ENCODE measurements at regions of chr3 and their contacts with region 1.

Region 1: DNA sequence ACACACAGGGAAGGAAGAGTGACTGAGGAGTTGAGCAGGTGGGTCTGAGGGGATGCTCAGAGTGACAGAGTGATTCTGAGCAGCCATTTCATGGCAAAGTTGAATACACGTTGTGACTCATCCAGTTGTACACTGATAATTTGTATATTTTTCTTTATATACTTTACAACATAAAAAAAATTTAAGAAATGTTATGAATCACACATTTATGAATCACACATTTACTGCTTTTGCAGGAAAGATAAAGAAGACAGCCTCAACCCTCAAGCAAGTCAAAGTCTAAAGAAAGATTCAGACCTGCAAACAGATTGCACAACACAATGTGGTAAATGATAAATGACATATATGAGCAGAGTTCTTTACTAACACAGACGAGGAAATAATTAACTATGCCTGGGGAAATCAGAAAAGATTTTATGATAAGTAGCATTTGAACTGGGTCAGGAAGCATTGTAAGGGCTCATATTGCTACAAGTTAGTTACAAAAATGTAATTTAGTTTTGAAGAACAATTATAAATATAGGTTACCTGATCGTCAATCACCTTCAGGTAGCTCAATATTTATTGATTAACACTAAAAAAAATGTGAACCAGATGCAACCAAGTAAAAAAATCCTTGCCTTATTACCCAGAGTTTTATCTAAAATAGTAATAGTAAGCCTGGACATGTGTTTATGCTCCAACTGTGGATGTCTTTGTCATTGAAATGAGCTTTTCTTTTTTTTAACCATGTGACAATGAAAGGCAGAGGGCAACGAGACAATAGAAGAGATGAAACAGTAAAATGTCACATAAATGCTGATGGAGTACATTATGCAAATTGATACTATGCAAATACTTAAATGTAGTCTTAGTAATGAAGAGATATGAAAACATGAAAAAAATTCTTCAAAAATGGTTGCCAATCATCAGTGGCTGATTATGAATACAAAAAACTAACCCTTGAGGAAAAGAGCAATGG is 20.8 kb upstream of the CHMP2B start:
- DNase-seq: peak; percentile 30 to 98
- H3K4me3 ChIP-seq: peak overlapping the region; percentile 15; the same call in 1 of the 2 replicates
- H3K27ac ChIP-seq: peak overlapping the region; percentile 60
- H3K4me1 ChIP-seq: peaks cover 33% of the 10 kb centered on the region
- H3K27me3 ChIP-seq: no peaks in the 10 kb centered on the region
- CTCF ChIP-seq: no peak

Region 2: DNA sequence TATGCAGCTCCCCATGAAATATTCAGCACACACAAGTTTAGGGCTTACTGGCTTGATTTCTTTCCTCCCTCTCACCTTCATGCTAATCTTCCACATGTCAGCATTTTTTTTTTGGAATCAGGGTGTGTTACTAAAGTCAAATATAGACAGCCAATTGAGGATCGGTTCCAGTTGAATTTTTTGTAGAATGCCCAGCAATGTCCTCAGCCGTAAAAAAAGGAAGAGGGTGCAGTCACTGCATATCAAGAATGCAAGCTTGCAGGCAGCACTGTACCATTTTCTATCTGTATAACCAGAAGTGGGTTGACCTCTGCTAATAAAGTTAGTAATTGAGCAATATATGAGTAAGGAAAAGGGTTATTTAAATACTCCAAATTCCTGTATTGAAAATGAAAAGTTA is 30.6 kb before region 1 on chr3:
- CTCF ChIA-PET with region 1: no interaction called
- POLR2A ChIA-PET with region 1: no interaction called
- intact Hi-C with region 1: no loop called
- DNase-seq: no peak
- H3K4me3 ChIP-seq: no peak overlapping the region
- H3K27ac ChIP-seq: no peak overlapping the region
- H3K4me1 ChIP-seq: no peaks in the 10 kb centered on the region
- H3K27me3 ChIP-seq: no peaks in the 10 kb centered on the region
- CTCF ChIP-seq: no peak

Region 3: GRCh38 chr3:87227104-87227834 is 20.9 kb after region 1 on chr3 and contains the start of gene CHMP2B:
- CTCF ChIA-PET with region 1: no interaction called
- POLR2A ChIA-PET with region 1: interaction called, 3 read pairs
- intact Hi-C with region 1: loop called (anchors 1 kb)
- DNase-seq: peak; percentile 85 to 92
- H3K4me3 ChIP-seq: peak within 1 kb of the TSS; percentile 84
- H3K27ac ChIP-seq: peak within 1 kb of the TSS; percentile 97
- H3K4me1 ChIP-seq: peaks cover 25% of the 10 kb centered on the region
- H3K27me3 ChIP-seq: no peaks in the 10 kb centered on the region
- CTCF ChIP-seq: no peak
- total RNA-seq, gene CHMP2B: 38.1 and 54.6 TPM in 2 replicates

Region 4: DNA sequence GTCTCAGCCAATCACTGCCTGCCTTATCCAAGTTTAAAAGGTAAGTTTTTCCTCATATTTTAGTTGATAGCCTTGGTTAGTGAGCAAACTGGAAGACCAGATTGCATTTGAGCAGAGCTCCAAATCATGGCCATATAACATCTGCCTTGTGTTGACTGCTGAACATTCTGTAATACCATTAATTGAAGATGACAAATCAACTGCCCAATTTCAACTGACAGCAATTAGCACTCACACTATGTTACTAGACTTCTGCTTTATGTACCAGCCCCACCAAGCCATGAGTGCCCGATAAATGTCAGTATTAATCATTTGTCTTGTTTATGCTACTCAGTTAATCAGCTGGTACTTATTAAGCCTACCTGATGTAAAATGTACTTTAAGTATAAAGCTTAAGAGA is 769.4 kb after region 1 on chr3:
- CTCF ChIA-PET with region 1: no interaction called
- POLR2A ChIA-PET with region 1: interaction called, 11 read pairs
- intact Hi-C with region 1: no loop called
- DNase-seq: no peak
- H3K4me3 ChIP-seq: no peak overlapping the region
- H3K27ac ChIP-seq: no peak overlapping the region
- H3K4me1 ChIP-seq: no peaks in the 10 kb centered on the region
- H3K27me3 ChIP-seq: no peaks in the 10 kb centered on the region
- CTCF ChIP-seq: no peak

Measured in PC-9 (cell line).